Activated CD4-positive, alpha-beta T cell treated with anti-CD3 and anti-CD28 coated beads, Interleukin-2, amount 10 ng/mL, durations not matched to agents 24 days and 14 days (primary cell): ENCODE measurements at regions of chr20 and their contacts with region 1.

Region 1: GRCh38 chr20:32336918-32337347 is 21.2 kb upstream of the ASXL1 start:
- DNase-seq: peak; percentile 65
- H3K4me3 Mint-ChIP-seq: no peak overlapping the region
- H3K27ac Mint-ChIP-seq: peak overlapping the region; percentile 4
- H3K4me1 Mint-ChIP-seq: peaks cover 33% of the 10 kb centered on the region
- H3K27me3 Mint-ChIP-seq: no peaks in the 10 kb centered on the region

Region 2: DNA sequence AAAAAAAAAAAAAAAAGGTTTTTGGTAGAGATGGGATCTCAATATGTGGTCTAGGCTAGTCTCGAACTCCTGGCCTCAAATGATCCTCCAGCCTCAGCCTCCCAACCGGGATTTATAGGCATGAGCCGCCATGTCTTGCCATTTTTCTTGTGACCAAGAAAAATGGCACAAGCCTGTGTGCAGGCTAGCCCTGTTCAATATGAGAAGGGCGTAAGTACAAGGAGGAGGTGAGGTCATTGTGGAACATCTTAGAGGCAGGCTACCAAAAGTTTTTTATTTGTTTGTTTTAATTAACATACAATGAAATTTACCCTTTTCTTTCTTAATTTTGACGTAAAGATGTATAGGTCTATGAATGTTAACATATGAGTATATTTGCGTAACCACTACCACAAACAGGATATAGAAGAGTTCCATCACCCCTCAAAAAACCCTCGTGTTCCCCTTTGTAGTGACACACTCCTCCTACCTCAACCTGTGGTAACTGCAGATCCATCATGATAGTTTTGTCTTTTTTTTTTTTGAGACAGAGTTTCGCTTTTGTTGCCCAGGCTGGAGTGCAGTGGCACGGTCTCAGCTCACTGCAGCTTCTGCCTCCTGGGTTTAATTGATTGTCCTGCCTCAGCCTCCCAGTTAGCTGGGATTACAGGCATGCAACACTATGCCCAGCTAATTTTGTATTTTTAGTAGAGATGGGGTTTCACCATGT is 87.7 kb before region 1 on chr20:
- intact Hi-C with region 1: loop called (anchors 1 kb)
- DNase-seq: peak; percentile 85
- H3K4me3 Mint-ChIP-seq: peak overlapping the region; percentile 56
- H3K27ac Mint-ChIP-seq: peak overlapping the region; percentile 90
- H3K4me1 Mint-ChIP-seq: peaks cover 49% of the 10 kb centered on the region
- H3K27me3 Mint-ChIP-seq: no peaks in the 10 kb centered on the region

Region 3: DNA sequence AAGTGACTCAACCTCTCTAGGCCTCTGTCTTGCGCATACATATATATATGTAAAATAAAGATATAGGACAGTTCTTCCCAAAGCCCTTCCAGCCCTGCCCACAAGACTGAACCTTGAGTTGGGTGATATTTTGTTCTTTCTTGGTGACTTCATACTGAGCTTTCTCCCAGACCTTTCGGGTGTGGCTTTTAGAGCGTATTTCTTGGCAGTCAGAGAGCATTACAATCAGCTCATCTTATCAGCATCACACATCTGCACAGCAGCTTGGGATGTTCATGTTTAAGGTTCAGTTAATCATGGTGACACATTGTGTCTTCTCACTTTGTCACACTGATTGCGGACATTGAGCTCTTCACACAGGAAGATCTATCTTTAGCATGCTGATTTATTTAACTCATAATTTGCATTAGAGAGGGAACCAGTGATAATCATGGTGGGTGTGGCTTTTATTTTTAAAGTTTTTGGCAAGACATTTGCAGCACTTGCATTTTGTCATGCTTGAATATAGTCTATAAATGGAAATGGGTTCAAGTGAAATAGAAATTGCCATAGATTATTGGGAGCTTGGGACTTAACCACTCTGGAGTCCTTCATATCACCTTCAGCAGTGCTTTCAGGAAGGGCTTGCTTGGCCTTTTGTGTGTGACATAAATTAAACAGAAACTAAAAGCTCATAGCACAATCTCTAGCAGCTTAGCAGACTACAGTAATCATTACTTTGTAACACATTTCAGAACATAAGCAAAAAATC is 51.1 kb before region 1 on chr20:
- intact Hi-C with region 1: loop called (anchors 1 kb)
- DNase-seq: peak; percentile 81
- H3K4me3 Mint-ChIP-seq: peak overlapping the region; percentile 59
- H3K27ac Mint-ChIP-seq: peak overlapping the region; percentile 87
- H3K4me1 Mint-ChIP-seq: peaks cover 54% of the 10 kb centered on the region
- H3K27me3 Mint-ChIP-seq: no peaks in the 10 kb centered on the region

Region 4: DNA sequence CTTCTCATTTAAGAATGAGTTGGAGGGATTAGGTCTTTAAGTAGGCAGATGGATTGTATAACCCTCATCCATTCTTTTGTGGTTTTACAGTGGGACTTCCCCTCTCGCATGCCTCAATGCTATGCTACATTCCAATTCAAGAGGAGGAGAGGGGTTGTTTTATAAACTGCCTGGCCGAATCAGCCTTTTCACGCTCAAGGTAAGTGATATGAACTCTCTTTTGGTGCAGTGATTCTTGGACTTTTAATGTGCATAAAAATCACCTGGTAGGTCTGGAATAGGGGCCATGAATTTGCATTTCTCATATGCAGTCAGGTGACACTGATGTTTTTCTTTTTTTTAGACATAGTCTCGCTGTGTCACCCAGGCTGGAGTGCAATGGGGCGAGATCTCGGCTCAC is 32.0 kb after region 1 on chr20:
- intact Hi-C with region 1: loop called (anchors 5 kb)
- DNase-seq: no peak
- H3K4me3 Mint-ChIP-seq: no peak overlapping the region
- H3K27ac Mint-ChIP-seq: peak overlapping the region; percentile 36
- H3K4me1 Mint-ChIP-seq: peaks cover 38% of the 10 kb centered on the region
- H3K27me3 Mint-ChIP-seq: no peaks in the 10 kb centered on the region

Region 5: DNA sequence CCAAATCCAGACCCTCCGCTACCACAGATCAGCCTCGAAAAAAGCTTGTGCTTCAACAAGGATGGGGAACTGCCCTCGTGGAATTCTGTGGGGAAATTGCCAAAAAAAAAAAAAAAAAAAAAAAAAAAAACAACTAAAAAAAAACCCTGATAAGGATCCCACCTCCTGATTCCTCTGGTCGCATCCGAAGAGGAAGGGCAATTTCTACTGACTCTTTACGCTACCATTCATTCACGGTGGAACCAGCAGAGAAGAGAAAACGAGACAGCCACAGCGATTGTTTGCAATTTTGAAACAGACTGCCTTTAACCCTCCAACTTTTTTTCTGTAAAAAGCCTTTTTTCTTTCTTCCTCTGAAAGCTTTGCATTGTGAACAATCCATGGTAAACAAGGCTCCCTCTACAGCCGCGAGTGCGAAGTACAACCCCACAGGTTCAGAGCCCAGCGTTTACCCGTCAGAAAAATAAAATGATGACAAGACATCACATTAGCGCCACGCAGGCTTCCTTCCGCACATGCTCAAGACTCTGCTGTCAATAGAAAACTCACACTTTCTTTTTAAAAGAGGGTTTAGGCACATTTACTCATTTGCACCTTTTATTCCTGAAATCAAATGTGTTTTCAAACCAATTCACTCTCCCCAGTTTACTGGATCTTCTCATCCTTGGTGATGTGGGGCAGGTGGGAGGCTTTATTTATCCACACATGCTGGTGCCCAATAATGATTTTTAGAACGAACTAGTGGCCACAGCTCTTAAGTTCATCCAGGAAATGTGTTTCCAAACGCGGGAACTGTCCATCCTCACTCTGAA is 148.2 kb after region 1 on chr20:
- intact Hi-C with region 1: loop called (anchors 5 kb)
- DNase-seq: peak; percentile 94
- H3K4me3 Mint-ChIP-seq: peak overlapping the region; percentile 85
- H3K27ac Mint-ChIP-seq: peak overlapping the region; percentile 86
- H3K4me1 Mint-ChIP-seq: peaks cover 19% of the 10 kb centered on the region
- H3K27me3 Mint-ChIP-seq: no peaks in the 10 kb centered on the region

Region 6: DNA sequence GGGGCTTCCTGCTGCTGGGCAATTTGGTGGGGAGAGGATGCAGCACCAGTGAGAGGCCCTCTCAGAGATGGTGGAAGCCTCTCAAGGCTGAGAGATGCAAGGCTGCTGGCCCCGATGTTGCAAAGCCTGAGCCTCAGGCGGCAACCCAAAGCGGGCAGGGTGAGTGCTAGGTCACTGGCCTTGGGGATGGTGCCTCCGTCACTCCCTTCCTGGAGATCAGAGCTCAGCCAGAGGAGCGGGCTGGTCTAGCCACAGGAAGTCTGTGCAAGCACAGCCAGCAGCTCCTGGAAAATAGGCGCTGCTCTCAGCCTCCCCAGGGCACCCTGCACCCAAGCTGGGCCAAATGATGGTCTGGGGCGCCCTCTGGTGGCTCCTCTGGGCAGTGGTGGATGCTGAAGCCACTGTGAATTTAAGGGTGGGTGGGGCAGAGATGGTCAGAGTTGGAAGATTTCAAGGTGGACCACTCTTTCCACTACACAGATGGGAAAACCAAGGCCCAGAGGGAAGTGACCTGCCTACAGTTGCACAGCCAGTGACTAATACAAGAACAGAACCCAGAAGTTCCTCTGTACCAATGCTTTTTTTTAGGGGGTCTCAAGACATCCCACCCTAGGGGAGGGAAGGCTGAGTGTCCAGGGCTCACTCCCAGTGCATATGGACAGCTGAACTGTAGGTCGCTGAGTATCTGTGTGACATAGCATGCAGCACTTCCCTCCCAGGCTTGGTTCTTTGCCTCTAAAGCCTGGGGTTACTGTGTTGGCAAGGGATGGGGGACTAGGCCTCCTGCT is 316.0 kb after region 1 on chr20:
- intact Hi-C with region 1: loop called (anchors 10 kb)
- DNase-seq: peak; percentile 96
- H3K4me3 Mint-ChIP-seq: no peak overlapping the region
- H3K27ac Mint-ChIP-seq: no peak overlapping the region
- H3K4me1 Mint-ChIP-seq: peaks cover 7% of the 10 kb centered on the region
- H3K27me3 Mint-ChIP-seq: no peaks in the 10 kb centered on the region